ENCODE measurements at regions of chr21 and their contacts with region 1.

Region 1: DNA sequence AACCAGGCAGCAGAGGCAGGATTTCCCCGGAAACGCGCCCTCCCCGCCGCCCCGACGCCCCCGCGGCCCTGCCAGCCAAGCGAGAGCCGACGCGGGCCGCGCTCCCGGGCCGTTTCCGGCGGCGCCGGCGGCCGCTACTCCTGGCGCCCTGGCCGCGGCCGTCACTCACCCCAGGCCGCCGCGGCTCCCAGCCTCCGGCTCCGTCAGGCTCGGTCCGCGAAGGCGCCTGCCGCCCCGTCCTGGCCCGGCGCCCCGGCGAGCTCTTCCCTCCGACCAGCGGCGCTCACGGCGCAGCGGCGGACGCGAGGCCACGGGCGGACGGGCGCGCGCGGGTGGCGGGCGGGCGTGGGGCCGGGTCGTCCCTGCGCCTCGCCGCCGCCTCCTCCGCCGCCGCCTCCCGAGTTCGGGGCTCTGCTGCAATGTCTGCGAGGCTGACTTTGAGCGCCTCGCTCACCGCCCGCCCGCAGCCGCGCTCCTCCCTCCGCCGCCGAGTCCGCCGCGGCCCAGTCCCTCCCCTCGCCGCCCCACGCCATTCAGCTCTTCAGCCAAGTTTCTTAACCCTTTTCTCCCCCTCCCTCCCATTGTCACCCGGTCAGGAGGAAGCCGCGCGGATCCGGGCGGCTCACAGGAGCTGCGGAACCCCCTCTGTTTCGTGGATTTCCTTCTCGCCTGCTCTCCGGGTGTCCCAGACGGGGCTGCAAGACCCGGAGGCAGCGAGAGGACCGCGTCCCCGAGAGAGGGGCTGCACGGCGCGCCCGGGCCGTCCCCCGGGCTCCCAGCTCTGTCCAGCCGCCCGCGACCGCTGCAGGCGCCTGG is at the start of gene NRIP1:
- DNase-seq: peak; percentile 88
- H3K4me3 Mint-ChIP-seq: peak within 1 kb of the TSS; percentile 77
- H3K27ac Mint-ChIP-seq: peak within 1 kb of the TSS; percentile 80
- H3K4me1 Mint-ChIP-seq: peaks cover 28% of the 10 kb centered on the region
- H3K27me3 Mint-ChIP-seq: no peaks in the 10 kb centered on the region
- CTCF ChIP-seq: no peak
- total RNA-seq, gene NRIP1: 26.5 and 31.4 TPM in 2 replicates

Region 2: GRCh38 chr21:14403681-14404318 is 661.0 kb before region 1 on chr21:
- CTCF ChIA-PET with region 1: no interaction called
- POLR2A ChIA-PET with region 1: no interaction called
- intact Hi-C with region 1: loop called (anchors 10 kb)
- DNase-seq: peak; percentile 47
- H3K4me3 Mint-ChIP-seq: no peak overlapping the region
- H3K27ac Mint-ChIP-seq: no peak overlapping the region
- H3K4me1 Mint-ChIP-seq: no peaks in the 10 kb centered on the region
- H3K27me3 Mint-ChIP-seq: no peaks in the 10 kb centered on the region
- CTCF ChIP-seq: peak; percentile 50

Region 3: DNA sequence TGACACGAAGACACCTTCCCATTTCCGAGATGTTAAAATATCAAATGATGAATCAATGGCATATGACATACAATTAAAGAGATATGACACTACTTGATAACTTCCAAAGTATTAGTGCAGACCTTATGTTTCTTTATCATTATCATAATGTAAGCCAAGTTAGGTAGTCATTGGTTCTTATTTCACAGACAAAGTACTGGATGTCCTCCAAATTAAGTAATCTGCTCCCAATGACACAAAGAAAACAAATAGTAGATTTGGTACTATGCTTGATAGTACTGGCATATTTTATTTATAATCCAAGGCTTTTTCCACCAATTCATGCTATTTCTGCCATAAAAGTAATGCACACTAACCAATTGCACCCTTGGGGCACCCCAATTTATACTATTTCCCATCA is 11.9 kb after region 1 on chr21:
- CTCF ChIA-PET with region 1: interaction called, 3 read pairs
- POLR2A ChIA-PET with region 1: interaction called, 12 read pairs
- intact Hi-C with region 1: no loop called
- DNase-seq: peak; percentile 28
- H3K4me3 Mint-ChIP-seq: no peak overlapping the region
- H3K27ac Mint-ChIP-seq: no peak overlapping the region
- H3K4me1 Mint-ChIP-seq: peaks cover 11% of the 10 kb centered on the region
- H3K27me3 Mint-ChIP-seq: no peaks in the 10 kb centered on the region
- CTCF ChIP-seq: no peak

Region 4: GRCh38 chr21:15192243-15192642 is 127.5 kb after region 1 on chr21:
- CTCF ChIA-PET with region 1: interaction called, 4 read pairs
- POLR2A ChIA-PET with region 1: interaction called, 10 read pairs
- intact Hi-C with region 1: no loop called
- DNase-seq: peak; percentile 95
- H3K4me3 Mint-ChIP-seq: no peak overlapping the region
- H3K27ac Mint-ChIP-seq: peak overlapping the region; percentile 8
- H3K4me1 Mint-ChIP-seq: peaks cover 11% of the 10 kb centered on the region
- H3K27me3 Mint-ChIP-seq: no peaks in the 10 kb centered on the region
- CTCF ChIP-seq: no peak

Region 5: GRCh38 chr21:15293240-15293639 is 228.5 kb after region 1 on chr21:
- CTCF ChIA-PET with region 1: no interaction called
- POLR2A ChIA-PET with region 1: interaction called, 5 read pairs
- intact Hi-C with region 1: loop called (anchors 10 kb)
- DNase-seq: peak; percentile 61
- H3K4me3 Mint-ChIP-seq: no peak overlapping the region
- H3K27ac Mint-ChIP-seq: no peak overlapping the region
- H3K4me1 Mint-ChIP-seq: peaks cover 30% of the 10 kb centered on the region
- H3K27me3 Mint-ChIP-seq: no peaks in the 10 kb centered on the region
- CTCF ChIP-seq: no peak

Region 6: DNA sequence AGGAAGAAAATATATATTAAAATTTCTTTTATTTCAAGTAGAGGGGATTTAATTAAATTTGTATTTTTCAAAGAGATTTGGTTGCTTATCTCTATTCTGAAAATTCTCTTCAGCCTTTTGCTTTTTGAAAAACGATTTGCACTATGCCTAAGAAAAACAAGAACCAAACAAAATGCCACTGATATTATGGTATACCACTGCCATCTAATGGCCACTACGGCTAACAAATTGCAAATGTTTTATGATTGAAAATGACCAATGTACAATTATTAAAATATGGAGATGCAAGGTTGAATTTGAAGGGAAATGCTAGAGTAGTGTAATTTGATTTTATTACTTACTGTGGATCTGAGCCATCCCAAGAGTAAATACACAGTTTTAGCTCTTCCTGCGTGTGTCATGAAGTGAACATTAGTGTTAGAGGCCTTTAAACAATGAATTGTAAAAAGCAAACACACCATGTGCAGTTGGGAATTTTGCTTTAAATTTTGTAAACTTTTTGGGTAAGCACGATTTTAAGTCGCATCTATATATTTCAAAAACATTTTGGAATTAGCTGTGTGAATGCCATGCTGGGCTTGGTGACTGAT is 527.6 kb after region 1 on chr21:
- CTCF ChIA-PET with region 1: no interaction called
- POLR2A ChIA-PET with region 1: no interaction called
- intact Hi-C with region 1: loop called (anchors 1 kb)
- DNase-seq: peak; percentile 60
- H3K4me3 Mint-ChIP-seq: no peak overlapping the region
- H3K27ac Mint-ChIP-seq: no peak overlapping the region
- H3K4me1 Mint-ChIP-seq: no peaks in the 10 kb centered on the region
- H3K27me3 Mint-ChIP-seq: no peaks in the 10 kb centered on the region
- CTCF ChIP-seq: peak; percentile 57

Measured in MCF 10A (cell line).